ENCODE measurements at regions of chr10 and their contacts with region 1.

Region 1: GRCh38 chr10:69861251-69862240 is 59.8 kb downstream of the COL13A1 start:
- DNase-seq: peak; percentile 95
- H3K4me3 ChIP-seq: no peak overlapping the region
- H3K27ac ChIP-seq: peak overlapping the region; percentile 10
- H3K4me1 ChIP-seq: peaks cover 62% of the 10 kb centered on the region
- H3K27me3 ChIP-seq: no peaks in the 10 kb centered on the region
- CTCF ChIP-seq: peak; percentile 34 to 51
- POLR2A ChIP-seq: no peak

Region 2: DNA sequence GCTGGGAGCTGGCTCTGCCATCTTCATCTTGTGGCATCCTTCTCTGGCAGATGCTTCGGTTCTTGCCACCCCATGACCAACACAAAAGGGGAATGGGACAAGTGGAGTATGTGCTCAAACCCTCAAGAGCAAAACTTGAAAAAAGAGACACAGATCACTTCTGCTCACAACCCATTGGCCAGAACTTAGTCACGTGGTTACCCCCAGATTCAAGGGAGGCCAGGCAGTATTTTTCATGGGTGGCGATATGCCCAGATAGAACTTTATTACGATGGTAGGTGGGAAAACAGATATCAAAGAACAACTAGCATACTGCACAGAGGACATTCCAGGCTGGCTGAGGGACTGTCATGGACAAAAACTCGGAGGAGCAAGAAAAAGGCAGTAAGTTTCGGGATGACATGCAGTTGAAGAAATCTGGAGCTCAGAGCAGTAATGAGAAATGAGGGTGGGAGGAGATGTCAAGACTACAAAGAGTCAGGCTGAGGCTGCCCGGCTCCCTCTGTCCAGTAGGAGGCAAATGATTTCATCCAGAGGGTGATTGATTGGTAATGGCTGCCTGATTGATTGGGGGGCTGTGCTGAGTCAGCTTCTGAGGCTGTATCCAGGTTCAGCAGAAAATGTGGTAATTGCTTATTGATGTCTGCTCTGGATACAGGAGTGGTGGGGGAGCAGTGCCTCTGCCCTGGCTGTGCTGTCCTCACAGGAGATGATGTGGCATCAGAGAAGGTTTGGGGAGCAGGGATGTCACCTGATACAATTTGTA is 34.6 kb before region 1 on chr10:
- CTCF ChIA-PET with region 1: interaction called, 3 read pairs
- POLR2A ChIA-PET with region 1: no interaction called
- dilution Hi-C with region 1: no loop called
- intact Hi-C with region 1: loop called (anchors 5 kb)
- DNase-seq: no peak
- H3K4me3 ChIP-seq: no peak overlapping the region
- H3K27ac ChIP-seq: no peak overlapping the region
- H3K4me1 ChIP-seq: peaks cover 37% of the 10 kb centered on the region
- H3K27me3 ChIP-seq: no peaks in the 10 kb centered on the region
- CTCF ChIP-seq: peak; percentile 6 to 13
- POLR2A ChIP-seq: no peak

Region 3: GRCh38 chr10:69839696-69840345 is 21.7 kb before region 1 on chr10:
- CTCF ChIA-PET with region 1: interaction called, 16 read pairs
- POLR2A ChIA-PET with region 1: no interaction called
- dilution Hi-C with region 1: no loop called
- intact Hi-C with region 1: no loop called
- DNase-seq: no peak
- H3K4me3 ChIP-seq: no peak overlapping the region
- H3K27ac ChIP-seq: peak overlapping the region; percentile 6
- H3K4me1 ChIP-seq: peaks cover 43% of the 10 kb centered on the region
- H3K27me3 ChIP-seq: no peaks in the 10 kb centered on the region
- CTCF ChIP-seq: no peak
- POLR2A ChIP-seq: no peak

Region 4: GRCh38 chr10:69845574-69846292 is 15.8 kb before region 1 on chr10:
- CTCF ChIA-PET with region 1: interaction called, 7 read pairs
- POLR2A ChIA-PET with region 1: no interaction called
- dilution Hi-C with region 1: no loop called
- intact Hi-C with region 1: loop called (anchors 1 kb)
- DNase-seq: peak; percentile 81
- H3K4me3 ChIP-seq: peak overlapping the region in 1 of 3 experiments; percentile 6
- H3K27ac ChIP-seq: peak overlapping the region; percentile 78
- H3K4me1 ChIP-seq: peaks cover 43% of the 10 kb centered on the region
- H3K27me3 ChIP-seq: no peaks in the 10 kb centered on the region
- CTCF ChIP-seq: no peak
- POLR2A ChIP-seq: no peak

Region 5: DNA sequence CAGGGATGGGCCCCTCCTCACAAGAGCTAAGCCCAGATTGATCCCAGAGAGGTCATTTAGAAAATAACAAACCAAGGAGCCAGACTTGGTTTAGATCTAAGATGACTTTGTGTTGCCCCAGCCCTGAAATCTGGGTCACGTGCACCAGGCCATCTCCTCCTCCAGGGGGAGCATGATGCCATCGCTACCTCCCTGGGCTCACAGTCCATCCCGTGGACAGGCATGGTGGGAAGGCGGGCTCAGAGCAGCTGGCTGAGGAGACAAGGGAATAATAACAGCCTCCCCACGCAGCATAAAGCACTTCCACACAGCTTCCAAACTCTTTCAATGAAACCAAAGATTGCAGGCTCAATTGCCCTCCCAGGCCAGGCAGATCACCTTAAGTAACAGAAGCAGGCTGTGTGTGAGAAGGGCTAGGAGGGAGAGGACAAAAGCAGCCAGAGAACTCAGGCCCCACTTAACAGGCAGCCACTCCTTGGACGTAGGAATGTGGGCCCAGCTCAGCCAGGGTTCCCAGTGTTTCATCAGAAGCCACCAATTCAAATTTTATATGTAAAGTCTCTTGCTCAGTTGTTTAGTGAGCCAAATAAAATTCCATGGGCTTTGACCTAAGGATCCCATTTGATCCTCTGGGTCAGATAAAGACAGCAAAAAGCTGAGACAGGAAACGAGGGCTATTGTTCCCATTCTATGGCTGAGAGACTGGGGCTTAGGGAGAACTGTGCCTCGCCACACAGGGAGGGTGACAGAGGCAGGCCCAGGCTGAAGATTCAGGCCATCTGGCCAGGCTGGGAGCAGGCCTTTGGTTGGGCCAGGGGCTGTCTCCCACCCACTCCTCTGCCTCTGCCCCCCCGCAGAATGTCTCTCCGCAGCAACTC is 40.3 kb after region 1 on chr10:
- CTCF ChIA-PET with region 1: interaction called, 13 read pairs
- POLR2A ChIA-PET with region 1: no interaction called
- dilution Hi-C with region 1: no loop called
- intact Hi-C with region 1: no loop called
- DNase-seq: peak; percentile 71
- H3K4me3 ChIP-seq: no peak overlapping the region
- H3K27ac ChIP-seq: peak overlapping the region; percentile 38
- H3K4me1 ChIP-seq: peaks cover 11% of the 10 kb centered on the region
- H3K27me3 ChIP-seq: no peaks in the 10 kb centered on the region
- CTCF ChIP-seq: peak; percentile 71 to 81
- POLR2A ChIP-seq: no peak

Region 6: GRCh38 chr10:69929575-69929974 is 68.0 kb after region 1 on chr10:
- CTCF ChIA-PET with region 1: no interaction called
- POLR2A ChIA-PET with region 1: no interaction called
- dilution Hi-C with region 1: no loop called
- intact Hi-C with region 1: no loop called
- DNase-seq: no peak
- H3K4me3 ChIP-seq: no peak overlapping the region
- H3K27ac ChIP-seq: no peak overlapping the region
- H3K4me1 ChIP-seq: no peaks in the 10 kb centered on the region
- H3K27me3 ChIP-seq: no peaks in the 10 kb centered on the region
- CTCF ChIP-seq: no peak
- POLR2A ChIP-seq: no peak

Measured in endothelial cell of umbilical vein (primary cell).